Activated T-helper 2 cell treated with anti-CD3 and anti-CD28 coated beads, Interferon-gamma antibody, Interleukin-2, Interleukin-4, amounts not matched to agents 10 μg/mL and 5 μg/mL and 100 μg/mL, durations not matched to agents 14 hours and 24 hours and 36 hours (primary cell): ENCODE measurements at regions of chr9 and their contacts with region 1.

Region 1: DNA sequence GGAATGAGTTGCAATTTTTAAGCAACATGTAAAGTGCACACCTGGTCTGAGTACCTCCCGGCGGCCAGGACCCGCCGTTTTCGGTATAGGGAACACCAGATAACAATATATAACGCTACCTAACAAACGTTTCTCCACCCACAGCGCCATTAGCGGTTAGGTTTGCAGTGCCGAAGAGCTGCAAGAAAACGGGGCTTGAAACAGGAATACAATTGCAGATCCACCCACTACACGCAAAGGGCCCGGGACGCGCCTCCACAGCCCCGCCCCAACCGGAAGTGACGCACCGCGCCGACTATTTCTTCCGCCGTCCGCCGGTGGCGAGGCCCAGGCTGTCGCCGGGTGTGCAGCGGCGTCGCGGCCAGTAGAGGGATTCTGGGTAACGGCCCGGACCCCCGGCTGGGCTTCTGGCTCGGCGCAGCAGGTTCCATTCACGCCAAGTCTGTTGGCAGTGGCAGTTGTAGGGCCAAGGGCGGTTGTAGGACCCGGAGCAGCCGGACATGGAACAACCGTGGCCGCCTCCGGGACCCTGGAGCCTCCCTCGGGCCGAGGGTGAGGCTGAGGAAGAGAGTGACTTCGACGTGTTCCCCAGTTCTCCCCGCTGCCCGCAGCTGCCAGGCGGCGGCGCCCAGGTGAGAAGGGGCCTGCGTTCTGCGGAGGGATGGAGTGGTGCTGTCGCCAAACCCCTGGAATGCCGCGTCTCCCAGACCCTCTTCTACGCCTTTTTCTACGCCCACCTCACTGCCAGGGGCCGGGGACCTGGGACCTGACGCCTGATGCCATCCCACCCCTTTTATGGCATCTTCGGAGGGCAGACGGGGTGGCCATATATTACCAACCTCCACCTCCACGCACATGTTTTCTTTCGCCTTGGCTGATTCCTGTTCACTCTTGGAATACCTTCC is at the start of gene CDC37L1:
- DNase-seq: peak; percentile 99
- H3K4me3 Mint-ChIP-seq: no peak within 1 kb of the TSS
- H3K27ac Mint-ChIP-seq: no peak within 1 kb of the TSS
- H3K4me1 Mint-ChIP-seq: peaks cover 6% of the 10 kb centered on the region
- H3K27me3 Mint-ChIP-seq: peaks cover 2% of the 10 kb centered on the region
- total RNA-seq, gene CDC37L1: 10.0 and 10.2 TPM in 2 replicates

Region 2: GRCh38 chr9:2837915-2838314 is 1841.6 kb before region 1 on chr9:
- intact Hi-C with region 1: loop called (anchors 5 kb)
- DNase-seq: no peak
- H3K4me3 Mint-ChIP-seq: no peak overlapping the region
- H3K27ac Mint-ChIP-seq: no peak overlapping the region
- H3K4me1 Mint-ChIP-seq: peaks cover 27% of the 10 kb centered on the region
- H3K27me3 Mint-ChIP-seq: no peaks in the 10 kb centered on the region

Region 3: GRCh38 chr9:4366591-4367330 is 312.8 kb before region 1 on chr9:
- intact Hi-C with region 1: no loop called
- DNase-seq: no peak
- H3K4me3 Mint-ChIP-seq: no peak overlapping the region
- H3K27ac Mint-ChIP-seq: no peak overlapping the region
- H3K4me1 Mint-ChIP-seq: peaks cover 9% of the 10 kb centered on the region
- H3K27me3 Mint-ChIP-seq: peaks cover 6% of the 10 kb centered on the region

Region 4: GRCh38 chr9:4662108-4662988 is 17.2 kb before region 1 on chr9 and contains the start of gene PLPP6:
- intact Hi-C with region 1: loop called (anchors 1 kb)
- DNase-seq: peak; percentile 73
- H3K4me3 Mint-ChIP-seq: peak within 1 kb of the TSS; percentile 86
- H3K27ac Mint-ChIP-seq: peak within 1 kb of the TSS; percentile 63
- H3K4me1 Mint-ChIP-seq: peaks cover 48% of the 10 kb centered on the region
- H3K27me3 Mint-ChIP-seq: peaks cover 13% of the 10 kb centered on the region
- total RNA-seq, gene PLPP6: 4.8 and 5.9 TPM in 2 replicates

Region 5: GRCh38 chr9:4740638-4741364 is 61.3 kb after region 1 on chr9 and contains the start of gene AK3:
- intact Hi-C with region 1: loop called (anchors 1 kb)
- DNase-seq: peak; percentile 85
- H3K4me3 Mint-ChIP-seq: peak within 1 kb of the TSS; percentile 90
- H3K27ac Mint-ChIP-seq: peak within 1 kb of the TSS; percentile 89
- H3K4me1 Mint-ChIP-seq: peaks cover 29% of the 10 kb centered on the region
- H3K27me3 Mint-ChIP-seq: no peaks in the 10 kb centered on the region
- total RNA-seq, gene AK3: 33.9 and 34.5 TPM in 2 replicates

Region 6: DNA sequence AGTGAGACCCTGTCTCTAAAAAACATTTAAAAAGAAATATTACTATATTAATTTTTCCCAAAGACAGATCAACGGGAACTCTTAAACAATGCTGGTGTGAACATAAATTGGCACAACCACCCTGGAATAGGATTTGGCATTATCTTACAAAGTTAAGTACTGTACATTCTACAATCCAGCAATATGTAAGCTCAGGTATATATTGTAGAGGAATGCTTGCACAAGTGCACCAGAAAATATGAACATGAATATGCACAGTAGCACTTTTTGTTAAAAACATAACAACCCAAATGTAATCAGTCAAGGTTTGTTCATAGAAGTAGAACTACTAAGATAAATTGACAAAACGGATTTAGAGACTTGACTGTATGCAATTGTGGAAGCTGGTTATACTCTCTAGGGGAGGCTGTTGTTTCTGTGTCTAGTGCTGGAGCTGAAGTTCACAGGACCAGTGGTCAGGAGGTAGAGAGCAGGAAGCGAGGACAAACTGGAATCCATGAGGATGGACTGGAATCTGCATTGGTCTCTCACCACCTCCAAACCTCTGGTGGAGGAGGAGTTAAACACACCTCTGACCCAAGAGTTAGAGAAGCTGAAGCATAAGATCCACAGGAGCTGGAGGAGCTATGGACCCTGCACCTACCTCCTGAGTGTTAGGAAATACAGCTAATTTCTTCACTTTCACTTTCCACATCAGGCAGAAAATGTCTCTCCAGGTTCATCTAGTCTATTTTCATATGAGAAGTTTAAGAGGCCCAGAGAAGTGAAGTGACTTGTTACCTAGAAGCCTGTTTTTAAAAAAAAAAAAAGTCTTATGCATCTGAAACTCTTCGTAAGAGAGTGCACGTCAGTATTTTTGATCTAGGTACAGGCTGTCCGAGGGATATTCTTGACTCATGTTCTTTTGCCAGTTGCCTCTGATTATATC is 929.0 kb after region 1 on chr9:
- intact Hi-C with region 1: loop called (anchors 10 kb)
- DNase-seq: no peak
- H3K4me3 Mint-ChIP-seq: peak overlapping the region; percentile 59
- H3K27ac Mint-ChIP-seq: peak overlapping the region; percentile 23
- H3K4me1 Mint-ChIP-seq: peaks cover 16% of the 10 kb centered on the region
- H3K27me3 Mint-ChIP-seq: no peaks in the 10 kb centered on the region